CD4-positive, alpha-beta memory T cell (primary cell): ENCODE measurements at regions of chr2 and their contacts with region 1.

Region 1: GRCh38 chr2:38581193-38582147 is 21.3 kb downstream of the HNRNPLL start:
- DNase-seq: peak; percentile 62 to 82 (median 81)
- H3K4me3 ChIP-seq: no peak overlapping the region
- H3K4me3 Mint-ChIP-seq: peak overlapping the region in 1 of 8 donors; percentile 22
- H3K27ac ChIP-seq: no peak overlapping the region
- H3K27ac Mint-ChIP-seq: peak overlapping the region in 5 of 7 donors; percentile 41 to 65 (median 62)
- H3K4me1 ChIP-seq: peaks cover 51% of the 10 kb centered on the region
- H3K4me1 Mint-ChIP-seq: peaks cover 26 to 64% (median 41%) of the 10 kb centered on the region in 4 donors
- H3K27me3 ChIP-seq: no peaks in the 10 kb centered on the region
- H3K27me3 Mint-ChIP-seq: no peaks in the 10 kb centered on the region

Region 2: GRCh38 chr2:38565333-38565732 is 16.1 kb before region 1 on chr2:
- CTCF ChIA-PET with region 1: interaction called, 33 read pairs
- POLR2A ChIA-PET with region 1: interaction called, 3 read pairs
- intact Hi-C with region 1: no loop called
- DNase-seq: no peak
- H3K4me3 ChIP-seq: no peak overlapping the region
- H3K4me3 Mint-ChIP-seq: no peak overlapping the region
- H3K27ac ChIP-seq: no peak overlapping the region
- H3K27ac Mint-ChIP-seq: no peak overlapping the region
- H3K4me1 ChIP-seq: no peaks in the 10 kb centered on the region
- H3K4me1 Mint-ChIP-seq: no peaks in the 10 kb centered on the region
- H3K27me3 ChIP-seq: no peaks in the 10 kb centered on the region
- H3K27me3 Mint-ChIP-seq: no peaks in the 10 kb centered on the region

Region 3: DNA sequence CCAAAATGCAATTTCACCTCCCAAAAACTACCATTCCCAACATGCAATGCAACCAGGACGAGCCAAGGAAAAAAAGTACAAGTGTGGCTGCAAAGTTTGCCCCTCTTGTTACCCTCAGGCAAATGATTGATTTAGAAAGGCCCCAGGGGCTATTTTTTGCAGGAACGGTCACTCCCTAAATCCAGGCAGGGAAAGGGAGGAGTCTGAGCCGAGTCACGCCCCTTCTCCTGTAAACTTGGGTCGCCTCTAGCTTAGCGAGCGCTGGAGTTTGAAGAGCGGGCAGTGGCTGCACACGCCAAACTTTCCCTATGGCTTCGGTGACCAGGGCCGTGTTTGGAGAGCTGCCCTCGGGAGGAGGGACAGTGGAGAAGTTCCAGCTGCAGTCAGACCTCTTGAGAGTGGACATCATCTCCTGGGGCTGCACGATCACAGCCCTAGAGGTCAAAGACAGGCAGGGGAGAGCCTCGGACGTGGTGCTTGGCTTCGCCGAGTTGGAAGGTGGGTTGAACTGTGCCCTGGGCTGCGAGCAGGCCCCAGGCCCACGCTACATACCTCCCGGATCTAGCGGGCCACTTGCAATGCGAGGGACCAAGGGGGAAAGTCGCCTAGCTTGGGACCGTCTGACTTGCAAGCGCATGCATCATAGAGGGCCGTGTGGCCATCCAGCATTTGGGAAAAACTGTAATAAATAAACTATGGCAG is 84.5 kb after region 1 on chr2 and contains the start of gene GALM:
- CTCF ChIA-PET with region 1: interaction called, 49 read pairs
- POLR2A ChIA-PET with region 1: interaction called, 16 read pairs
- intact Hi-C with region 1: no loop called
- DNase-seq: peak; percentile 51 to 68 (median 62)
- H3K4me3 ChIP-seq: peak within 1 kb of the TSS; percentile 63 to 74
- H3K4me3 Mint-ChIP-seq: peak within 1 kb of the TSS; percentile 81 to 97 (median 94)
- H3K27ac ChIP-seq: peak within 1 kb of the TSS; percentile 73
- H3K27ac Mint-ChIP-seq: peak within 1 kb of the TSS; percentile 93 to 100 (median 98)
- H3K4me1 ChIP-seq: peaks cover 73% of the 10 kb centered on the region
- H3K4me1 Mint-ChIP-seq: peaks cover 47 to 80% (median 64%) of the 10 kb centered on the region in 4 donors
- H3K27me3 ChIP-seq: no peaks in the 10 kb centered on the region
- H3K27me3 Mint-ChIP-seq: no peaks in the 10 kb centered on the region
- total RNA-seq, gene GALM: 35.5 to 35.8 TPM

Region 4: DNA sequence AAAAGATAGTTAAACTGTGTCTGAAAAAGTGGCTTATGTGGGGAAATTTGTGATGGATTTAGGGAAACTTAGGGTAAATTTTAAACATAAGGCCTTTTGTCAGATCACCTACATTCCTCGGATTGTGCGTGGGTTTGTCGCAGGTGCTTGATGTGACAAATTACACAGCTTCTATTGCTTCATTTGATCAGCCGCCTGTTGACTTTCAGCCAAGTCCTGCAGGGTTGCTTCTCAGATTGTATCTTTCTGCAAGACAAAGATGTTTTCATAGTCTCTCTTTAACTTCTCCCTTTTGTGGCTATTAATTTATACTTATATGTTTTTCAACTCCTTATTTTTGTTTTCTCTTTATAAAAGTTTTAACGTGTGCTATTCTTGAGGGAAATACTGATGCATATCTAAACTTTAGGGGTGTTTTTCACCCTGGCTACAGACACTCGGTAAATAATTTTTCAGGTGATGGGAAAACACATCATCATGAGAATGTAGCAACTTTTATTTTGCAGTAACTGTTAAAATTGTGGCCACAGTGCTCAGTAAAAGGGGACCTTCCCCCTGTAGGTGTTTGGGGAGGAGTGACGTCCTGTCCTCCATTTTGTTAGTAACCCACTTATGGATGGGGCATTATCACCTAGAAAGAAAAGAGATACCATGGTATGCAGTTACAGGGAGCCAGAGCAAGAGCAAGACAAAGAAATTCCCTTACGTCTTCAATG is 115.8 kb after region 1 on chr2:
- CTCF ChIA-PET with region 1: interaction called, 11 read pairs
- POLR2A ChIA-PET with region 1: interaction called, 7 read pairs
- intact Hi-C with region 1: no loop called
- DNase-seq: peak; percentile 74 to 87 (median 75)
- H3K4me3 ChIP-seq: peak overlapping the region in 1 of 2 donors; percentile 0
- H3K4me3 Mint-ChIP-seq: peak overlapping the region; percentile 43 to 81 (median 76)
- H3K27ac ChIP-seq: peak overlapping the region; percentile 72
- H3K27ac Mint-ChIP-seq: peak overlapping the region; percentile 93 to 98 (median 97)
- H3K4me1 ChIP-seq: peaks cover 100% of the 10 kb centered on the region
- H3K4me1 Mint-ChIP-seq: peaks cover 52 to 92% (median 74%) of the 10 kb centered on the region in 4 donors
- H3K27me3 ChIP-seq: no peaks in the 10 kb centered on the region
- H3K27me3 Mint-ChIP-seq: no peaks in the 10 kb centered on the region

Region 5: DNA sequence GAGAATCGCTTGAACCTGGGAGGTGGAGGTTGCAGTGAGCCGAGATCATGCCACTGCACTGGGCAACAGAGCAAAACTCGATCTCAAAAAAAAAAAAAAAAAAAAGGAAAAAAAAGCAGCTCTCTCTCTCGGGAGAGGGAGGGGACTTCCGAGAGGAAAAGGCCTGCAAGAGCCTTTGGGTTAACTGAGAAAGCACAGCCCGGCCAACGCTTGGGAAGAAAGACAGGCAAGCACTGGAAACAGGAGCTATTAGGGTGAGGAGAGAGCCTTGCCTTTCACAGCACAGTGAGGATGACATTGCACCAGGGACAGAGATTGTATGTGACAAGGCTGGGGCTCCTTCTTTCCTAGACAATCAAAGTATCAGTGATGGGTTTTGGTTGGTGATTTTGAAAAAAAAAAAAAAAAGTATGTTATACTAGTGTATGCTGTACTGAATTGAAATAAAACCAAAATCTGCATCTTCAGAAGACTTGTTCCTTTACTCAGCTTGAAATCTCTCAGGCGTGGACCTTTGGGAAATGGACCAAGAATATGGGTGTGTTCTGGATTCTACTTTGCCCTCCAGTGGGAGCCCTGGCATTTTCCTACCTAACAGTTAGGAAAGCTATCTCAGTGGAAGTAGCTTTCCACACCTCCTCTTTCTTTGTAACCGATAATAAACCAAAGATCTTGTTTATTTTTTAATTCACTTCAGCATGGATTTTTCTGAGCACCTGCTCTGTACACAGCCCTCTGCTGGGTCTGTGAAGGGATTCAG is 153.0 kb after region 1 on chr2:
- CTCF ChIA-PET with region 1: interaction called, 217 read pairs
- POLR2A ChIA-PET with region 1: interaction called, 4 read pairs
- intact Hi-C with region 1: no loop called
- DNase-seq: no peak
- H3K4me3 ChIP-seq: no peak overlapping the region
- H3K4me3 Mint-ChIP-seq: no peak overlapping the region
- H3K27ac ChIP-seq: no peak overlapping the region
- H3K27ac Mint-ChIP-seq: peak overlapping the region in 3 of 7 donors; percentile 47 to 70 (median 68)
- H3K4me1 ChIP-seq: no peaks in the 10 kb centered on the region
- H3K4me1 Mint-ChIP-seq: peaks cover 7 to 21% (median 14%) of the 10 kb centered on the region in 4 donors
- H3K27me3 ChIP-seq: no peaks in the 10 kb centered on the region
- H3K27me3 Mint-ChIP-seq: no peaks in the 10 kb centered on the region